GM12878 (cell line): ENCODE measurements at regions of chr1 and their contacts with region 1.

Region 1: GRCh38 chr1:53485478-53486394 is 26.5 kb downstream of the DMRTB1 start:
- DNase-seq: no peak
- ATAC-seq: peak; percentile 96
- H3K4me3 ChIP-seq: no peak overlapping the region
- H3K27ac ChIP-seq: no peak overlapping the region
- H3K4me1 ChIP-seq: no peaks in the 10 kb centered on the region
- H3K27me3 ChIP-seq: peaks cover 5 to 7% of the 10 kb centered on the region in 2 experiments; a peak in 3 of 4 replicates
- CTCF ChIP-seq: peak; percentile 81 to 89 (median 85)
- EP300 ChIP-seq: no peak
- POLR2A ChIP-seq: no peak
- RAD21 ChIP-seq: peak; percentile 79

Region 2: GRCh38 chr1:53501065-53502005 is 15.6 kb after region 1 on chr1:
- CTCF ChIA-PET with region 1: no interaction called
- POLR2A ChIA-PET with region 1: no interaction called
- RAD21 ChIA-PET with region 1: no interaction called
- SMC1A ChIA-PET with region 1: no interaction called
- in situ Hi-C with region 1: no loop called
- intact Hi-C with region 1: no loop called
- DNase-seq: no peak
- ATAC-seq: no peak
- H3K4me3 ChIP-seq: no peak overlapping the region
- H3K27ac ChIP-seq: no peak overlapping the region
- H3K4me1 ChIP-seq: no peaks in the 10 kb centered on the region
- H3K27me3 ChIP-seq: no peaks in the 10 kb centered on the region; a peak in 1 of 4 replicates
- CTCF ChIP-seq: no peak
- EP300 ChIP-seq: no peak
- POLR2A ChIP-seq: no peak
- RAD21 ChIP-seq: no peak

Region 3: DNA sequence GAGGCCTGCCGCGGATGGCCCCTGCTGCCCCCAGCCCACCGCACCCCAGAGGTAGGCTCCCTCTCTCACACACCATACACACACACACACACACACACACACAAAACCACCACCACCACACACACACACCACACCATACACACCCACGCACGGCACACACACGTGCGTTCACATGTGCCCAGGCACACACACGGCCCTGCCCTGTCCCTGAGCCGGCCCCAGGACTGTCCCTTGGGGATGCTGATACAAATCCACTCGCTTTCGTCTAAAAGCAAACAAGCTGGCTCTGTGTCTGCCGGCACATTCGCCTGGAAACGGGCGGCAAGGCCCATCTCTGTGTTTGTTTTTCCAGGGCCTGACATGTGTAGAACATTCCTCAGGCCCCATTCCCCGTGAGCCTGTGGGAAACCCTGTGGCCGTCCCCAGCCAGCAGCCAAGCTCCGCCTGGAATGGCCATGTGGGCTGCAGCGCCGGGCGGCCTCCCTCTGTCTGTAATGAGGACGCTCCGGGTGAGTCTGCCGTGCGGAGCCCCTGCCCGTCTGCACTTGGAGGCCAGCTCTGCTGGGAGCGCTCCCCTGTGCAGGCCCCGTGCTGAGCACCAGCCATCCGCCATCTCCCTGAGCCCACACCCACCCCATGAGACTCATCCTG is 40.8 kb after region 1 on chr1:
- CTCF ChIA-PET with region 1: no interaction called
- POLR2A ChIA-PET with region 1: no interaction called
- RAD21 ChIA-PET with region 1: no interaction called
- SMC1A ChIA-PET with region 1: no interaction called
- in situ Hi-C with region 1: no loop called
- intact Hi-C with region 1: no loop called
- DNase-seq: no peak
- ATAC-seq: no peak; the same call in 2 of the 3 replicates
- H3K4me3 ChIP-seq: no peak overlapping the region
- H3K27ac ChIP-seq: no peak overlapping the region
- H3K4me1 ChIP-seq: no peaks in the 10 kb centered on the region
- H3K27me3 ChIP-seq: peaks cover 0 to 2% of the 10 kb centered on the region in 2 experiments; a peak in 2 of 4 replicates
- CTCF ChIP-seq: no peak
- EP300 ChIP-seq: no peak
- POLR2A ChIP-seq: no peak
- RAD21 ChIP-seq: no peak

Region 4: DNA sequence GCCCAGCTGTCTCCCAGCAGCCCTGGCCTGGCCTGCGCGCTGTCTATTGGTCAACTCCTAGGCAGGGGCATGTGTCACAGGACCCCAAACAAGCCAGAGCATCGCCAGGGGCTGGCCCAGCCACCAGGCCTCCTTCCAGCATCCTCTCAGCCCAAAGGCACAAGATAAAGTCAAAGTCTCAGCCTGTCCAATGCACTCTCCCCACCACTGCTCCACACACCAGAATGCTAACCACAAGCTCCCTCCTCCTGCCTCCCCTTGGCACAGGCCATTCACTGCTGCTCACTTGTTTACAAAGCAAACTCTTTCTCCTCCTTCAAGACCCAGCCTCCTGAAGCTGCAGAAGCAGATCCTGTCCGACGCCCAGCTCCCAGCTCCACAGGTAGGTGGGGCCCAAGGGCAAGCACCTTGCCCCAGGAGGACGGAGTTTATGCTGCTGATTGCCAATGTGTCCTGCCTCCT is 106.8 kb after region 1 on chr1:
- CTCF ChIA-PET with region 1: no interaction called
- POLR2A ChIA-PET with region 1: no interaction called
- RAD21 ChIA-PET with region 1: no interaction called
- SMC1A ChIA-PET with region 1: no interaction called
- in situ Hi-C with region 1: no loop called
- intact Hi-C with region 1: no loop called
- DNase-seq: no peak
- ATAC-seq: peak; percentile 18; the same call in 1 of the 3 replicates
- H3K4me3 ChIP-seq: no peak overlapping the region
- H3K27ac ChIP-seq: no peak overlapping the region
- H3K4me1 ChIP-seq: no peaks in the 10 kb centered on the region
- H3K27me3 ChIP-seq: peaks cover 0 to 2% of the 10 kb centered on the region in 2 experiments; a peak in 1 of 4 replicates
- CTCF ChIP-seq: no peak
- EP300 ChIP-seq: no peak
- POLR2A ChIP-seq: no peak
- RAD21 ChIP-seq: no peak

Region 5: DNA sequence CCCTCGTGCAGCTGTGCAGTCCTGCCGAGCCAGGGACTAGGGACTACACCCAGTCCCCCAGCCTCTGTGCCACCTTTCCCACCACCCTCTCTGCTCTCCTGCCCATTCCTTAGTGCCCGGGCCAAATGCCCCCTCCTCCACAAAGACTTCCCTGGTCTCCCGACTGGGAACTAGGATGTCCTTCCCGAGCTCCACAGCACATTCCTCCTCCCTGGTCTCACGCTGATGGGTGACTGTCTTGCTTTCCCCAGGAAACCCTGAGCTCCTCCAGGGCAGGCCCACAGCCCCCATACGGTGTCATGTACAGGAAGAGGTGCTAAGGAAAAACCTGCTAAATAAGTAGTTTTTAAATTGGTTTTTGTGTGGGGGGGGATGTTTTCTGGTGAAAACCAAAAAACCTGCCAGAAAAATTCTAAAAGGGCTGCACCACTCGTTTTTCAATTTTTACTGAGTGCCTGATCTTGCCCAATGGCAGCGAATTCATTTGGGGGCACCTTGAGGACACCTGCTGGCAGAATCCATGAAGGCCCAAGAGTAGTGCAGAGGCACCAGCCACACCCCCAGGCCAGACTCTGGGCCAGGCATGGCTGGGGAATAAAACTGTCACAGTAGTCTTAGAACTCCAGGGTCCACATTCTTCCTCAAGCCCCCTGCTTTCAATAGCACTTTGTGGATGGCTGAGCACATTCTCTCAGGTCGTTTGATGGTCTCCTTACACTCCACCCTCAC is 202.8 kb after region 1 on chr1:
- CTCF ChIA-PET with region 1: interaction called, 3 read pairs
- POLR2A ChIA-PET with region 1: no interaction called
- RAD21 ChIA-PET with region 1: interaction called, 3 read pairs
- SMC1A ChIA-PET with region 1: no interaction called
- in situ Hi-C with region 1: no loop called
- intact Hi-C with region 1: loop called (anchors 2 kb)
- DNase-seq: no peak
- ATAC-seq: peak; percentile 67
- H3K4me3 ChIP-seq: no peak overlapping the region
- H3K27ac ChIP-seq: no peak overlapping the region
- H3K4me1 ChIP-seq: no peaks in the 10 kb centered on the region
- H3K27me3 ChIP-seq: peaks cover 0 to 9% of the 10 kb centered on the region in 2 experiments; a peak in 2 of 4 replicates
- CTCF ChIP-seq: 0 out of 6 replicates have a peak, but pooled peaks of 1 of the 3 experiments have one; percentile 9
- EP300 ChIP-seq: no peak
- POLR2A ChIP-seq: no peak
- RAD21 ChIP-seq: no peak